ENCODE measurements at regions of chr20 and their contacts with region 1.

Region 1: GRCh38 chr20:44609511-44610312 is 27.3 kb downstream of the PKIG start:
- DNase-seq: peak; percentile 26
- H3K4me3 ChIP-seq: no peak overlapping the region
- H3K27me3 ChIP-seq: no peaks in the 10 kb centered on the region
- CTCF ChIP-seq: peak; percentile 99

Region 2: GRCh38 chr20:44475694-44476560 is 133.8 kb before region 1 on chr20 and contains the start of gene TTPAL:
- CTCF ChIA-PET with region 1: interaction called, 16 read pairs
- POLR2A ChIA-PET with region 1: interaction called, 3 read pairs
- DNase-seq: peak; percentile 19
- H3K4me3 ChIP-seq: peak within 1 kb of the TSS; percentile 68
- H3K27me3 ChIP-seq: no peaks in the 10 kb centered on the region
- CTCF ChIP-seq: peak; percentile 54
- polyA plus RNA-seq, gene TTPAL: 9.4 and 13.8 TPM in 2 replicates

Region 3: DNA sequence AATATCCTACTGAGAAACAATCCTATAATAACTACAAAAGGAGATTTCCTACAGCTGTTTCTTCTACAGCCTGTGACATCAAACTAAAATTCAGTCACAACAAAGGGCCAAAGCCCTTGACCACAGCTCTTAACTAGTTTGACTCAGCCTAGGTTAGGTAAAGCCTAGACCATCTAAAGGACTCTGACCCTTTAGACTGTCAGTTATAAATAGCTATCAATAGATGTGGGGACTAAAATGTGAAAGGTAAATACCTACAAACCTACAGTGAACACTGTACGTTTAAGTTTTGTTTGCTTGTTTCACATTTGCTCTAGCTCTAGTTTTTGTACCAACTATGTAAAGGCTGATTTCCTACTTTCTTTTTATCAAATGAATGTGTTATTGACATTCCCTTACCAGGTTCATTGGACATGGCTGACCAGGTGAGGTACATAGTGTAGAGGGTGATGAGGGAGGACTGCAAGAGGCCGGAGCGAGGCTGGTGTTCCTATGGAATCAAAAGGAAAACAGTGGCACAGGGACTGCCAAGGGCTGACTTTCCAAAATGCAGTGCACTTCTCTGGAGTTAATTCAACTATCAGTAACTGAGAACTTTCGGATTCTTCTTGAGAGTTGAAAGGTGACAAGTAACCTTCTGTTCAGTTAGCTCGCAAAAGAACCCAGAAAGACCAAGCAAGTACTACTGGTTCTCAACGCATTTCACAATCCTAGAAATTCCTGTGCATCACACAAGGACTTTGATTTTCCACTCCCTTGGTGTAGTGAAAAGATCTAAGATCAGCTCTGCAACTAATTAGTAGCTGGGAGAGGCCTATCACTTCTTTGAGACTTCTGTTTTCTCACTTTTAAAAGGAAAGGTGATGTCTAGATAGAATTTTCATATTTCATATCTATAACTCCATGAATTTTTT is 105.1 kb before region 1 on chr20:
- CTCF ChIA-PET with region 1: interaction called, 10 read pairs
- POLR2A ChIA-PET with region 1: interaction called, 3 read pairs
- DNase-seq: no peak
- H3K4me3 ChIP-seq: no peak overlapping the region
- H3K27me3 ChIP-seq: no peaks in the 10 kb centered on the region
- CTCF ChIP-seq: no peak

Region 4: GRCh38 chr20:44526129-44526528 is 83.6 kb before region 1 on chr20:
- CTCF ChIA-PET with region 1: interaction called, 12 read pairs
- POLR2A ChIA-PET with region 1: no interaction called
- DNase-seq: no peak
- H3K4me3 ChIP-seq: no peak overlapping the region
- H3K27me3 ChIP-seq: no peaks in the 10 kb centered on the region
- CTCF ChIP-seq: no peak

Region 5: GRCh38 chr20:44576297-44576696 is 33.4 kb before region 1 on chr20:
- CTCF ChIA-PET with region 1: interaction called, 19 read pairs
- POLR2A ChIA-PET with region 1: no interaction called
- DNase-seq: no peak
- H3K4me3 ChIP-seq: no peak overlapping the region
- H3K27me3 ChIP-seq: no peaks in the 10 kb centered on the region
- CTCF ChIP-seq: 0 out of 2 replicates have a peak, but pooled peaks have one; percentile 35